ENCODE measurements at regions of chr20 and their contacts with region 1.

Region 1: DNA sequence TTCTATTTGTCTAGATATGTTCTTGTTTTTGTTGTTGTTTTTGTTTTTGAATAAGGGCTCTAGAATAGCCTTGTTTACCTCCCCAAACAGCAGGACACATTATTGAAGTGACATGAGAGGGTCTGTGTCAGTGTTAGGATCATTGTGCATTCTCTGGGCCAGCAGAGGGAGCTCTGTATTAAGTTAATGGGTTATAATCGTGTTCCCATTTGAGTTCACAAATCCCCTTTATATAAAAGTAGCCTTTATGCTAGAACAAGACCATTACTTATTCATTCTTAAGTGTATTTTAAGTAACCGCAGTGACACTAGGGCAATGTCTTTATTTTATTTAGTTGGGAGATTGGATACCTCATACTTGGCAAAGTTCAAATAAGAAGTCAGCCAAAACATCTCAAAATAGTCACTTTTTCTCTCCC is 44.8 kb downstream of the STK4 start:
- DNase-seq: peak; percentile 75
- H3K4me3 Mint-ChIP-seq: no peak overlapping the region
- H3K27ac Mint-ChIP-seq: peak overlapping the region; percentile 11
- H3K4me1 Mint-ChIP-seq: peaks cover 42% of the 10 kb centered on the region
- H3K27me3 Mint-ChIP-seq: no peaks in the 10 kb centered on the region
- CTCF ChIP-seq: peak; percentile 74

Region 2: DNA sequence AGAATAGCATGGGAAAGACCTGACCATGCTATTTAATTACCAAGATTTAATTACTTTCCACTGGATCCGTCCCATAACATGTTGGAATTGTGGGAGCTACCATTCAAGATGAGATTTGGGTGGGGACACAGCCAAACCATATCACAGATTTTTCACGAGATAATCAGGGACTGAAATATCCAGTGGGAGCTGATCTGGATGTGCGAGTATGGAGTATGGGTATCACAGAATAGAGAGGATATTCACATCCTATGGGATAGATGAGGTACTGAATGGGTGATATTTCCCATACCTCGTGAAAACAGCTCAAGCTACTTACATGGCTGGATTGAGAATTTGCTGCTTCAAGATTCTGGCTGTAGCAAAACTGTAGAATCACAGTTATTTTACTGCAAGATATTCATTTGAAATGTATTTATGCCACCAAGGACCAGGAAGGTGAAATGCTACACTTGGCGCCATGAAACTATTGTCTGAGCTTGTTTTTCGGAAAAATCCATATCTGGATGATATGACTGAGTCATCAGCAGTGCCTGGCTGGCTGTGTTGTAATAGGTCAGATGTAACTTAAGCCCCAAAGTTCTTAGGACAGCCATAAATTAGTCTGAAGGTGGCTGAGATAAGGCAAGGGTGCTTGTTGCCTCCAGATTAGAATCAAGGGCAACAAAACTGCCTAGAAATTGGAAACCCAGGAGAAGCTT is 60.0 kb after region 1 on chr20:
- CTCF ChIA-PET with region 1: interaction called, 6 read pairs
- intact Hi-C with region 1: loop called (anchors 2 kb)
- DNase-seq: peak; percentile 31
- H3K4me3 Mint-ChIP-seq: no peak overlapping the region
- H3K27ac Mint-ChIP-seq: peak overlapping the region; percentile 4
- H3K4me1 Mint-ChIP-seq: peaks cover 24% of the 10 kb centered on the region
- H3K27me3 Mint-ChIP-seq: no peaks in the 10 kb centered on the region
- CTCF ChIP-seq: no peak

Region 3: GRCh38 chr20:45082468-45082867 is 71.4 kb after region 1 on chr20:
- CTCF ChIA-PET with region 1: no interaction called
- intact Hi-C with region 1: no loop called
- DNase-seq: no peak
- H3K4me3 Mint-ChIP-seq: no peak overlapping the region
- H3K27ac Mint-ChIP-seq: no peak overlapping the region
- H3K4me1 Mint-ChIP-seq: no peaks in the 10 kb centered on the region
- H3K27me3 Mint-ChIP-seq: no peaks in the 10 kb centered on the region
- CTCF ChIP-seq: no peak

Region 4: GRCh38 chr20:45095753-45096371 is 84.7 kb after region 1 on chr20:
- CTCF ChIA-PET with region 1: interaction called, 32 read pairs
- intact Hi-C with region 1: loop called (anchors 1 kb)
- DNase-seq: peak; percentile 75
- H3K4me3 Mint-ChIP-seq: no peak overlapping the region
- H3K27ac Mint-ChIP-seq: no peak overlapping the region
- H3K4me1 Mint-ChIP-seq: peaks cover 9% of the 10 kb centered on the region
- H3K27me3 Mint-ChIP-seq: no peaks in the 10 kb centered on the region
- CTCF ChIP-seq: peak; percentile 76

Region 5: DNA sequence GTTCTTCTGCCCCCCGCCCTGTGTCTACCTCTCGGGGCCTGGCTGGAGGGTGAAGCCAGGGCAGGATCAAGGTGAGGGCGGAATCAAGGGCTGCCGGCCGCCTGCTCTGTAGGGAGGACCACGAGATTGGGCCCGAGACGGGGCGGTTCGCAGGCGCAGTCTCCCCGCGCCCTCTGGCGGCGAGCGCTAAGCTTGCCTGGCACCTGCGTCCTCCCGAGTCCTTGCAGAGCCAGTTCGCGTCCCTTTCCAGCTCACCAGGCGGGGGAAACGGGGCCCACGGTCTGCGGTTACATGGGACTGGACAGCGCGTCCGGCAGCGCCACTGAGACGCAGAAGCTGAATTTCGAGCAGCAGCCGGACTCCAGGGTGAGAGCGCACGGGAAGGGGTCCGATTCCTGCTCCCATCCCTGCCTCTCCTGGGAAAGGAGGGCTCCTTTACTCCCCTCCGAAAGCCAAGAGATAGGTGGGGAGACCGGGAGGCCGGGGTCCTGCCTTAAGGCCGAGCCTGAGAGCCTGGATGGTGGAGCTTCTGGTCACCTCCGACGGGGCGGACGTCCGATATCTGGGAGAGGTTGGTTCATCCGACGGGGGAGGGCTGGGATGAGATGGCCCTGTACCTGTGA is 300.6 kb after region 1 on chr20:
- CTCF ChIA-PET with region 1: no interaction called
- intact Hi-C with region 1: loop called (anchors 1 kb)
- DNase-seq: peak; percentile 92
- H3K4me3 Mint-ChIP-seq: no peak overlapping the region
- H3K27ac Mint-ChIP-seq: no peak overlapping the region
- H3K4me1 Mint-ChIP-seq: no peaks in the 10 kb centered on the region
- H3K27me3 Mint-ChIP-seq: peaks cover 94% of the 10 kb centered on the region
- CTCF ChIP-seq: peak; percentile 93

Measured in Calu3 (cell line).